CD4-positive, alpha-beta T cell (primary cell): ENCODE measurements at regions of chr9 and their contacts with region 1.

Region 1: GRCh38 chr9:127770905-127771569 is 7.4 kb downstream of the SH2D3C start:
- DNase-seq: peak; percentile 87 to 98 (median 97)
- ATAC-seq: peak; percentile 80
- H3K4me3 ChIP-seq: peak overlapping the region; percentile 69
- H3K4me3 Mint-ChIP-seq: peak overlapping the region; percentile 90
- H3K27ac ChIP-seq: peak overlapping the region; percentile 90 to 91
- H3K27ac Mint-ChIP-seq: peak overlapping the region; percentile 97
- H3K4me1 ChIP-seq: peaks cover 86% of the 10 kb centered on the region
- H3K4me1 Mint-ChIP-seq: peaks cover 69% of the 10 kb centered on the region
- H3K27me3 ChIP-seq: no peaks in the 10 kb centered on the region
- H3K27me3 Mint-ChIP-seq: no peaks in the 10 kb centered on the region
- CTCF ChIP-seq: no peak

Region 2: DNA sequence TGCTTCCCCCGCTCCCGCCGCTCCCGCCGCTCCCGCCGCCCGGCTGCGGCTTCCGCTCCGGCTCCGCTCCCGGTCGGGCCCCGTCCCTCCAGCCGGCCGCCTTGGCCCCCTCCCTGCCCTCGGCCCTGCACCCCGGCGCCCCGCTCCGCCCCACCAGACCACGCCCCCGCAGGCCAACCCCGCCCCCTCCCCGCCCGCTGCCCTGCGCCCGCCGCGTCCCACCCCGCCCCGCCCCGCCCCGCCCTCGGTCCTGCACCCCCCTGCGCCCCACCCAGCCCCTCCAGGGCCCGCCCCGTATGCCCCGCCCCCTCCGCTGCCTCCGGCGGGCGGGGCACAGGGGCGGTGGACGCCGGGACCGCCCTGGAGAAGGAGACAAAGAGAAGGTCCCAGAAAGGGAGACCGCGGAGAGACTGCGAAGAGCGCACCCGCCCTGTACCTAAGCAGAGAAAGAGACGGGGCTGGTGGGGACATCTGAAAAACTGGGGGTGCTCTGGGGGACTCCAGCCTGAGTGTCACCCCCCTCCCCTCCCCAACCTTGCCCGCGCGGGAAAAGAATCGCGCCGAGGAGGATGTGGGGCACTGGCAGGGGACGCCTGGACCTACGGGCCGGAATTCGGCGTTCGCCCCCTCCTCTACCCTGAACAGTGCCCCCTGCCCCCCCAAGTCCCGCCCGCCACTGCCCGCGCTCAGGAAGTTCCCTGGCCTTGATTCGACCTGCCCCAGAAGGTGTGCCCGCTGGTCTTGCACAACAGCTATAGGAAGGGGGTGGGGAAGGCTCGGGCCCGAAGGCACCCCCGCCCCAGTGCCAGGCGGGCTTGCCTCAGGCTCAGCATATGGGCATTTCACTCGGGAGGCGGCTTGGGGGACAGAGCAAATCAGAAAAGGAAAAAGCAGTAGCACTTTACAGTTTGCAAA is 201.8 kb before region 1 on chr9:
- CTCF ChIA-PET with region 1: no interaction called
- POLR2A ChIA-PET with region 1: no interaction called
- intact Hi-C with region 1: loop called in 1 of 2 experiments (anchors 1 kb)
- DNase-seq: peak; percentile 44 to 92 (median 74)
- ATAC-seq: peak; percentile 78
- H3K4me3 ChIP-seq: peak overlapping the region; percentile 77
- H3K4me3 Mint-ChIP-seq: peak overlapping the region; percentile 87
- H3K27ac ChIP-seq: peak overlapping the region; percentile 46 to 52
- H3K27ac Mint-ChIP-seq: peak overlapping the region; percentile 63
- H3K4me1 ChIP-seq: peaks cover 43% of the 10 kb centered on the region
- H3K4me1 Mint-ChIP-seq: peaks cover 20% of the 10 kb centered on the region
- H3K27me3 ChIP-seq: no peaks in the 10 kb centered on the region
- H3K27me3 Mint-ChIP-seq: no peaks in the 10 kb centered on the region
- CTCF ChIP-seq: no peak

Region 3: GRCh38 chr9:127746959-127747569 is 24.0 kb before region 1 on chr9:
- CTCF ChIA-PET with region 1: interaction called, 11 read pairs
- POLR2A ChIA-PET with region 1: interaction called, 3 read pairs
- intact Hi-C with region 1: no loop called
- DNase-seq: peak in 9 of 14 experiments; percentile 24 to 68 (median 35)
- ATAC-seq: peak; percentile 87
- H3K4me3 ChIP-seq: no peak overlapping the region
- H3K4me3 Mint-ChIP-seq: peak overlapping the region; percentile 13
- H3K27ac ChIP-seq: no peak overlapping the region
- H3K27ac Mint-ChIP-seq: peak overlapping the region; percentile 73
- H3K4me1 ChIP-seq: peaks cover 9% of the 10 kb centered on the region
- H3K4me1 Mint-ChIP-seq: peaks cover 9% of the 10 kb centered on the region
- H3K27me3 ChIP-seq: no peaks in the 10 kb centered on the region
- H3K27me3 Mint-ChIP-seq: no peaks in the 10 kb centered on the region
- CTCF ChIP-seq: no peak